Mammary epithelial cell (primary cell): ENCODE measurements at regions of chr17 and their contacts with region 1.

Region 1: DNA sequence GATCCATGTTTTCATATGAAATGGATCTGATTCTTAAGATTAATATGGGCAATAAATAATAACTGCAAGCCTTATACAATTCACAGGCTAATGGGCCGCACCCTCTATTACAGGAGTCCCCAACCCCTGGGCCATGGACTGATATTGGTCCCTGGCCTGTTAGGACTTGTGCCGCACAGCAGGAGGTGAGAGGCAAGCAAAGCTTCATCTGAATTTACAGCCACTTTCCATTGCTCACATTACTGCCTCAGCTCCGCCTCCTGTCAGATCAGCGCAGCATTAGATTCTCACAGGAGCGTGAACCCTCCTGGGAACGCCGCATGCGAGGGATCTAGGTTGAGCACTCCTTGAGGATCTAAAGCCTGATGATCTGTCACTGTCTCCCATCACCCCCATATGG is 26.8 kb downstream of the METTL16 start:
- DNase-seq: peak; percentile 85
- H3K4me3 ChIP-seq: peak overlapping the region; percentile 13 to 35 (median 30)
- H3K27ac ChIP-seq: peak overlapping the region; percentile 43
- H3K4me1 ChIP-seq: peaks cover 20% of the 10 kb centered on the region
- H3K27me3 ChIP-seq: no peaks in the 10 kb centered on the region
- CTCF ChIP-seq: peak in 1 of 2 donors; percentile 10

Region 2: DNA sequence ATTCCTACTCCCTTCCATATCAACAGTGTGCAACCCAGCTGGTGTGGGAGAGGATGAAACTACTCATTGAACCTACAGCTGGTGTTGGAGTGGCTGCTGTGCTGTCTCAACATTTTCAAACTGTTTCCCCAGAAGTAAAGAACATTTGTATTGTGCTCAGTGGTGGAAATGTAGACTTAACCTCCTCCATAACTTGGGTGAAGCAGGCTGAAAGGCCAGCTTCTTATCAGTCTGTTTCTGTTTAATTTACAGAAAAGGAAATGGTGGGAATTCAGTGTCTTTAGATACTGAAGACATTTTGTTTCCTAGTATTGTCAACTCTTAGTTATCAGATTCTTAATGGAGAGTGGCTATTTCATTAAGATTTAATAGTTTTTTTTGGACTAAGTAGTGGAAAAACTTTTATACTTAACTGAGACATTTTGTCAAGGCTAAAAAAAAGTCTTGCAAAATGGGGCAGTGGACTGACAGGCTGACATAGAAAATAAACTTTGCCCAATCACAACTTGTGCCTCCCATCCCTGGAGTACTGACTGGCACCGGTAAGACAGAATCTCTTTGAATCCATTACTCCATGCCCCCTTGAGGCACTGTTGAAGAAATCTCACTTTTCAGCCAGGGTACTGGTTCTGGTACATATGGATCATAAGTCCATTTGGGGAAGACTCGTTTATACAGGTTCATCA is 161.1 kb before region 1 on chr17:
- CTCF ChIA-PET with region 1: no interaction called
- dilution Hi-C with region 1: no loop called
- in situ Hi-C with region 1: no loop called
- intact Hi-C with region 1: no loop called
- DNase-seq: no peak
- H3K4me3 ChIP-seq: no peak overlapping the region
- H3K27ac ChIP-seq: no peak overlapping the region
- H3K4me1 ChIP-seq: no peaks in the 10 kb centered on the region
- H3K27me3 ChIP-seq: no peaks in the 10 kb centered on the region
- CTCF ChIP-seq: no peak

Region 3: DNA sequence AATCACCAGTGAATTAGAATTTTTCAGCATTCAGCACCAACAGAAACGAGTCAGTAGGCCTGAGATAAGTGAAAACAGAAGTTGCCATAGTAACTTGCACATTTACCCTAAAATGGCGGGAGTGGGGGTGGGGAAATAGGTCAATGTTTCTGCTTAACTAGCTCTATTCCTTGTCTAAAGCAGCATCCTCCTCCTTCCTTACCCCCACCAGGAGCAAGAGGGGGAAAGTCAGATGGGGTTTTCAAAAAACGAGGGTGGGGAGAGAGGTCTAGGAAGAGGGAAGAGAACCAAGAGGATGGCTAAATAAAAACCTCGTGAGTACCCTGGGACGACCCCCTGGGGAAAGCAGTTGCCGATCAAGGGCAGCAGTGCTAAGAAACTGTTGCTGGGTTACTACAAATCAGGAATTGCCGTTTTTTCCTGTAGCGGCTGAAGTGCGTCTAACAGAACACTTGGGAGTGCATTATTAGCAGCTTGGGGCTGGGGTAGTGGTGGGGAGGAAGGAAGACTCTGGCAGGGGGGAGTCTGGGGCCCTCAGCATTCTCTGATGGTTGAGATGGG is 49.6 kb before region 1 on chr17:
- CTCF ChIA-PET with region 1: no interaction called
- dilution Hi-C with region 1: no loop called
- in situ Hi-C with region 1: no loop called
- intact Hi-C with region 1: no loop called
- DNase-seq: no peak
- H3K4me3 ChIP-seq: no peak overlapping the region
- H3K27ac ChIP-seq: no peak overlapping the region
- H3K4me1 ChIP-seq: peaks cover 3% of the 10 kb centered on the region
- H3K27me3 ChIP-seq: no peaks in the 10 kb centered on the region
- CTCF ChIP-seq: no peak

Region 4: DNA sequence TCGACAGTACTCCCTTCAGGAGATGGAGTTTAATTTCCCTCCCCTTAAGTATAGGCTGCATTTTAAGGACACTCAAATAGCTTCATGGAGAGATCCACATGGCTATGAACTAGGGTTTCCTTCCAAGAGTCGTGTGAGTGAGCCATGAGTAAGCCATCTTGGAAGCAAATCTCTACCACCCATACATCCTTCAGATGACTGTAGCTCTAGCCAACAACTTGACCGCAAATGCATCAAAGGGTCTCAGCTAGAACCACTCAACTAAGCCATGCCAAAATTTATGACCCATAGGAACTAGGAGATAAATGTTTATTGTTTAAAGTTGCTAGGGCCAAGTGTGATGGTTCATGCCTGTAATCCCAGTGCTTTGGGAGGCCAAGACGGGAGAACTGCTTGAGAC is 16.6 kb before region 1 on chr17:
- CTCF ChIA-PET with region 1: no interaction called
- dilution Hi-C with region 1: no loop called
- in situ Hi-C with region 1: no loop called
- intact Hi-C with region 1: no loop called
- DNase-seq: no peak
- H3K4me3 ChIP-seq: no peak overlapping the region
- H3K27ac ChIP-seq: no peak overlapping the region
- H3K4me1 ChIP-seq: no peaks in the 10 kb centered on the region
- H3K27me3 ChIP-seq: no peaks in the 10 kb centered on the region
- CTCF ChIP-seq: no peak

Region 5: GRCh38 chr17:2511462-2512369 is 26.8 kb after region 1 on chr17 and contains the start of gene METTL16:
- CTCF ChIA-PET with region 1: no interaction called
- dilution Hi-C with region 1: no loop called
- in situ Hi-C with region 1: no loop called
- intact Hi-C with region 1: loop called (anchors 1 kb)
- DNase-seq: peak; percentile 98
- H3K4me3 ChIP-seq: peak within 1 kb of the TSS; percentile 78 to 94 (median 82)
- H3K27ac ChIP-seq: peak within 1 kb of the TSS; percentile 96
- H3K4me1 ChIP-seq: peaks cover 9% of the 10 kb centered on the region
- H3K27me3 ChIP-seq: no peaks in the 10 kb centered on the region
- CTCF ChIP-seq: no peak
- total RNA-seq, gene METTL16: 15.2 to 28.0 TPM

Region 6: GRCh38 chr17:2521257-2521656 is 36.4 kb after region 1 on chr17:
- CTCF ChIA-PET with region 1: no interaction called
- dilution Hi-C with region 1: loop called (anchors 5 kb)
- in situ Hi-C with region 1: no loop called
- intact Hi-C with region 1: no loop called
- DNase-seq: no peak
- H3K4me3 ChIP-seq: no peak overlapping the region
- H3K27ac ChIP-seq: no peak overlapping the region
- H3K4me1 ChIP-seq: no peaks in the 10 kb centered on the region
- H3K27me3 ChIP-seq: no peaks in the 10 kb centered on the region
- CTCF ChIP-seq: no peak

Region 7: DNA sequence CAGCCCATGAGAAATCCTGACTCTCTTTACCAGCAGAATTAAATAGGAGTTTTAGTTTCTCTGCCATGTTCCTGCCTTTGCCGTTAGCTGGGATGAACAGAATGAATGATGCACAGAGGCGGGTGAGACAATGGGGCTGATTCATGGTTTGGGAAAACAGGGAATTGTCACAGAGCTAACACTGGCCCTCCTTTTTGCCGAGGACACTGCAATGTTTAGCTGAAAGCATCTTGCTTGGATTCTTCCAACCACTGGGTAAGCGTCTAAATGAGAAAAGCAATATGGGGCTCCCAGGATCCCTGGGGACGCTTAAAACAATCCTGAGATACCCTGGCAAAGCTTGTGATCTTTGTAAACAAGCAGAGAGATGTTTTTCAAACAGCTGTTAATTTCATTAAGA is 95.8 kb after region 1 on chr17:
- CTCF ChIA-PET with region 1: no interaction called
- dilution Hi-C with region 1: loop called (anchors 5 kb)
- in situ Hi-C with region 1: no loop called
- intact Hi-C with region 1: no loop called
- DNase-seq: no peak
- H3K4me3 ChIP-seq: no peak overlapping the region
- H3K27ac ChIP-seq: no peak overlapping the region
- H3K4me1 ChIP-seq: no peaks in the 10 kb centered on the region
- H3K27me3 ChIP-seq: no peaks in the 10 kb centered on the region
- CTCF ChIP-seq: no peak

Region 8: DNA sequence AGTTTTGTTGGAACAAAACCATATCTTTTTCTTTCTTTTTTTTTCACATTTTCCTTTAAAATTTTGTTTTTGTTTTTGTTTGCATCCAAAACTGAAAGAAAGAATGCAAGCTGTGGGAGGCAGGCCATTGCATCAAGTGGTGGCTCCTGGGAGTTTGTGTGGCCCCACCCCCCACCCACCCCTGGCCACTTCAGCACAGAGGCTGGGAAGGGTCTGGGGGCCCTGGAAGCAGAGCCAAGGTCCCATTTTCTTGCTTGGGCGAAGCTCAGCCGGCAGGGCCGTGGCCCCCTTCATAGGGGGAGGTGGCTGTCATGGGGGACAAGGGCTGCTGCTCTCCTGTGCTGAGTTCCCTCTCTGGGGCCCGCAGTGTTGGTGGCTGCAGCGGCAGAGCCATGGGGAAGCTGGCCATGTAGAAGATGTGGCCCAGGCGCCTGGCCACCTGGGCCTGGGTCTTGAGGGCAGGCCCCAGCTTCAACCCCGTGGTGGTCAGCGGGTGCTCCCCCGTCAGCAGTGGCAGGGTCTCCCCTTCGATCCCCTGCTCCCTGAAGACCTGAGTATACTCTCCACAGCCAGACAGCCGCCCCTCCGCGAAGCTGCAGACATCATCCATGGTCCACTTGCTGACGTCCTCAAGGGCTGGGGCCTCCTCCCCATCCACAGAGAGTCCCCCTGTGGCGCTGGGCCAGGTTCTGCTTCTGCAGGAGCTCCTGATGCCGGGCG is 128.4 kb after region 1 on chr17:
- CTCF ChIA-PET with region 1: no interaction called
- dilution Hi-C with region 1: loop called (anchors 10 kb)
- in situ Hi-C with region 1: no loop called
- intact Hi-C with region 1: no loop called
- DNase-seq: no peak
- H3K4me3 ChIP-seq: no peak overlapping the region
- H3K27ac ChIP-seq: no peak overlapping the region
- H3K4me1 ChIP-seq: no peaks in the 10 kb centered on the region
- H3K27me3 ChIP-seq: no peaks in the 10 kb centered on the region
- CTCF ChIP-seq: no peak

Region 9: GRCh38 chr17:2672026-2672425 is 187.2 kb after region 1 on chr17:
- CTCF ChIA-PET with region 1: no interaction called
- dilution Hi-C with region 1: no loop called
- in situ Hi-C with region 1: no loop called
- intact Hi-C with region 1: no loop called
- DNase-seq: no peak
- H3K4me3 ChIP-seq: no peak overlapping the region
- H3K27ac ChIP-seq: no peak overlapping the region
- H3K4me1 ChIP-seq: no peaks in the 10 kb centered on the region
- H3K27me3 ChIP-seq: no peaks in the 10 kb centered on the region
- CTCF ChIP-seq: no peak